Activated B cell treated with CpG ODN at 0.5 μM for 24 hours (primary cell): ENCODE measurements at regions of chr19 and their contacts with region 1.

Region 1: DNA sequence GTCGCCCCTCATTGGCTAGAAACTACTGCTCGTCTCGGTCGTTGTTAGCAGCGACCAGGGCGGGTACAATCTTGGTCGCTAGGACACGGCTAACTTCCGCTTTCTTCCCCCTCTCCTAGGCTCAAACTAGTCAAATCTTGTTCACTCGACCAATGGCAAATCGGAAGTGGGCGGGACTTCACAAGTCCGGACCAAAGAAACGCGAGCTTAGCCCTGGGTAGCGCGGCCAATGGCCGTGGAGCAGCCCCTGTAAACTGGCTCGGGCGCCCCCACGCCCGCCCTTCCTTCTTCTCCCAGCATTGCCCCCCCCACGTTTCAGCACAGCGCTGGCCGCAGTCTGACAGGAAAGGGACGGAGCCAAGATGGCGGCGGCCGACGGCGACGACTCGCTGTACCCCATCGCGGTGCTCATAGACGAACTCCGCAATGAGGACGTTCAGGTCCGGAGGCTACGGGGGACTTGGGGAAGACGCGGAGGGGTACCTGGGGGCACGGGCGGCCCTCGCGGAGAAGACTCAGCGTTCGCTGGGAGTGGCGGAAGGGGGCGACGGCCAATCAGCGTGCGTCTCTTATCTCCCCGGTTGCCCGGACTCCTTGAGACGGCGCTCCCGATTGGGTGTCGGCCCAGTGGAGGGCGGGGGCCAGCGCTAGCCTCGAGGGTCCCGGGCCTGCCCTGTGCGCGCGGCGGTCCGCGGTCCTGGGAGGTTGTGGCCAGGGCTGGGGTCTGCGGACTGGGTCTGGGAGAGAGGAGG is at the start of gene PPP2R1A:
- DNase-seq: peak; percentile 96
- ATAC-seq: peak; percentile 78
- H3K4me3 Mint-ChIP-seq: peak within 1 kb of the TSS; percentile 95
- H3K27ac Mint-ChIP-seq: peak within 1 kb of the TSS; percentile 98
- H3K4me1 Mint-ChIP-seq: peaks cover 54% of the 10 kb centered on the region
- H3K27me3 Mint-ChIP-seq: no peaks in the 10 kb centered on the region
- CTCF ChIP-seq: no peak
- total RNA-seq, gene PPP2R1A: 244 and 245 TPM in 2 replicates

Region 2: DNA sequence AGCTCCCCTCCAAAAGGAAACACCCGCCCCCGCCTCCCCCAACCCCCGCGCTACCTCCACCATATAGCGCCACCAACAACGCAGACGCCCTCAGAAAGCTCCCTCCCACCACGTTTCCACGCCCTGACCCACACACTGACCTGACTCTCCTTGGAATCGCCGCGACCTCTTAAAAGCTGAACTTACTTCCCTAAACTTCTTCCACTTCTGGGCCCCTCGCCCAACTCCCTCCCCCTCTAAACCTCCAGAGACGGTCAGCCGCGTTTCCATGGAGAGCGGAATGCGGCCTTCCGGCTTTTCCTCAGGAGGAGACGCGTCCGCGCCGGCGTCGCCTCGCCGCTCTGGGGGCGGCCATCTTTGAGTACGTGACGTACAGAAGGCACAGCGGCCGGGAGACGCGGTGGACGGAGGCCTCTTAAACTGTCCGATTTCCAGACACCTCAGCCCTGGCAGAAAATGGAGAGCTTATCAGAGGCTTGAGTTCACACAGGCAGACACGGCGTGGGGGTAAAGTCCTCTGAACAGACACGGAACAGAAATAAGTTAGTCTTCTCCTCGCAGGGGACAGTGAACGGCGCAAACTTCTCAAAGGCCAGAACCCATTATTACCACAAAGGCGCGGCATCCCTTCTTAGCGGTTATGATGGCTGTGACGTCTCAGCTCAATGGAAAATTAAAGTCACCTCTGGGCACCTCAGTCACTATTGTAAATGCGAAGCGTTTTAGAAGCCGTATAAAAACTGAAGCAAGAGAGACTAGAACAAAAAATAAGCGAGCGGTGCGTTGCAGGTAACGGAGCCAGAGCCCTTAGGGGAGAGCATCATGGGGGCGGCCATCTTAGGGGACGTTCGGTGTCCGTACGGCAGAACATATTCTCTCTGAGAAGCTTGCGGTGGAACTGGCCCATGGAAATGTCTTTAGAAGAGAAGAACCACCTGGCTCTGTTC is 141.1 kb before region 1 on chr19 and contains the start of gene ZNF432:
- CTCF ChIA-PET with region 1: no interaction called
- POLR2A ChIA-PET with region 1: interaction called, 9 read pairs
- intact Hi-C with region 1: loop called (anchors 1 kb)
- DNase-seq: peak; percentile 82
- ATAC-seq: peak; percentile 88
- H3K4me3 Mint-ChIP-seq: peak within 1 kb of the TSS; percentile 100
- H3K27ac Mint-ChIP-seq: peak within 1 kb of the TSS; percentile 99
- H3K4me1 Mint-ChIP-seq: peaks cover 19% of the 10 kb centered on the region
- H3K27me3 Mint-ChIP-seq: no peaks in the 10 kb centered on the region
- CTCF ChIP-seq: no peak
- total RNA-seq, gene ZNF432: 18.1 and 18.4 TPM in 2 replicates

Region 3: DNA sequence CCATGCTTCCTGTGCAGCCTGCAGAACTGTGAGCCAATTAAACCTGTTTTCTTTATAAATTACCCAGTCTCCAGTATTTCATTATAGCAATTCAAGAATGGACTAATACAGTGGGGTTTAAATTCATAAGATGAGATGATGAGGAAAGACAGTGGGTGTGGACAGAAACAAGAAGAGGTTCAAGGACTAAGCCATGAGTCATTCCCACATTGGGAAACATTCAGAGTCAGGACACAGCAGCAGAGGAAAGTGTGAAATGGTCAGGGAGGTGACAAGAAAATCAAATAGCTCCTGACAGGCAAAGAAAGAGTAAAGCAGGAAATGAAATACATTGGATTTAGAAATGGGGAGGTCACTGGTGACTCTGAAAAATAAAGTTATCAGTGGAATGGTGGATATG is 103.4 kb before region 1 on chr19:
- CTCF ChIA-PET with region 1: no interaction called
- POLR2A ChIA-PET with region 1: no interaction called
- intact Hi-C with region 1: no loop called
- DNase-seq: no peak
- ATAC-seq: no peak
- H3K4me3 Mint-ChIP-seq: no peak overlapping the region
- H3K27ac Mint-ChIP-seq: no peak overlapping the region
- H3K4me1 Mint-ChIP-seq: peaks cover 3% of the 10 kb centered on the region
- H3K27me3 Mint-ChIP-seq: no peaks in the 10 kb centered on the region
- CTCF ChIP-seq: no peak

Region 4: GRCh38 chr19:52171321-52172169 is 18.4 kb before region 1 on chr19 and contains the start of gene ZNF836:
- CTCF ChIA-PET with region 1: no interaction called
- POLR2A ChIA-PET with region 1: interaction called, 62 read pairs
- intact Hi-C with region 1: loop called (anchors 1 kb)
- DNase-seq: peak; percentile 80
- ATAC-seq: peak; percentile 97
- H3K4me3 Mint-ChIP-seq: peak within 1 kb of the TSS; percentile 97
- H3K27ac Mint-ChIP-seq: peak within 1 kb of the TSS; percentile 96
- H3K4me1 Mint-ChIP-seq: peaks cover 27% of the 10 kb centered on the region
- H3K27me3 Mint-ChIP-seq: no peaks in the 10 kb centered on the region
- CTCF ChIP-seq: no peak
- total RNA-seq, gene ZNF836: 27.4 and 28.0 TPM in 2 replicates

Region 5: GRCh38 chr19:52258426-52258825 is 68.5 kb after region 1 on chr19:
- CTCF ChIA-PET with region 1: no interaction called
- POLR2A ChIA-PET with region 1: no interaction called
- intact Hi-C with region 1: no loop called
- DNase-seq: no peak
- ATAC-seq: no peak
- H3K4me3 Mint-ChIP-seq: no peak overlapping the region
- H3K27ac Mint-ChIP-seq: no peak overlapping the region
- H3K4me1 Mint-ChIP-seq: no peaks in the 10 kb centered on the region
- H3K27me3 Mint-ChIP-seq: peaks cover 2% of the 10 kb centered on the region
- CTCF ChIP-seq: no peak

Region 6: DNA sequence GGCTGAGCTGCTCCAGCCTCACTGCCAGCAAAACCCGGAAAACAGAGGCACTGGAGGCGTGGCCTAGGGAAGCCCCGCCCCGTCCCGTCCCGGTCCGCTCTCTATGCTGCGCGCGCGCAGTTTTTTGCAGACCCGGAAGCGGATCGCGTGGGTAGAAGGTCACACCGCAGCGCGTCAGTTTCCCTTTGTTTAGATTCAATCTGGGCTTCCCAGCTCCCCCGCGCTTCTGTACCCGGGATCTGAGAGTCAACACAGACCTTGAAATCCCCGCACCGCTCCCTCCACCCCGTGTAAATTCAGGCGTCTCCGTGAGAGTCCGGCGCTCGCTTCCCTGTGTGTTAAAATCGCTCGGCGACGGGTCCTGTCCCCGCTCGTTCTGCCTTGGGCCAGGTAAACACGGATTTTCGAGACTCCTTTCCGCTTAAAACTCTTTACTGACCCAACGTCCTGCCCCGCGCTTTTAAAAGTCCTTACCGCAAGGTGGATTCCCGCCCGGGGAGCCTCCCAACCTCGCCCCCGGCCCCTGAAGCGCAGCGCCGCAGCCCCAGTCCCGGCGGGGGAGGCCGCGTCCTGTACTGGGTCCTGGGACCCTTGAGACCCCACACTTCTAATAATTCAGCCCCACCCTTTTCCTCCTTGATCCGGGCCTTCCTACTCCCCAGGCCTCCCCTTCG is 146.3 kb after region 1 on chr19 and contains the start of gene ZNF610:
- CTCF ChIA-PET with region 1: no interaction called
- POLR2A ChIA-PET with region 1: interaction called, 10 read pairs
- intact Hi-C with region 1: no loop called
- DNase-seq: peak; percentile 84
- ATAC-seq: peak; percentile 96
- H3K4me3 Mint-ChIP-seq: peak within 1 kb of the TSS; percentile 97
- H3K27ac Mint-ChIP-seq: peak within 1 kb of the TSS; percentile 93
- H3K4me1 Mint-ChIP-seq: peaks cover 14% of the 10 kb centered on the region
- H3K27me3 Mint-ChIP-seq: no peaks in the 10 kb centered on the region
- CTCF ChIP-seq: no peak
- total RNA-seq, gene ZNF610: 1.1 and 2.0 TPM in 2 replicates

Region 7: DNA sequence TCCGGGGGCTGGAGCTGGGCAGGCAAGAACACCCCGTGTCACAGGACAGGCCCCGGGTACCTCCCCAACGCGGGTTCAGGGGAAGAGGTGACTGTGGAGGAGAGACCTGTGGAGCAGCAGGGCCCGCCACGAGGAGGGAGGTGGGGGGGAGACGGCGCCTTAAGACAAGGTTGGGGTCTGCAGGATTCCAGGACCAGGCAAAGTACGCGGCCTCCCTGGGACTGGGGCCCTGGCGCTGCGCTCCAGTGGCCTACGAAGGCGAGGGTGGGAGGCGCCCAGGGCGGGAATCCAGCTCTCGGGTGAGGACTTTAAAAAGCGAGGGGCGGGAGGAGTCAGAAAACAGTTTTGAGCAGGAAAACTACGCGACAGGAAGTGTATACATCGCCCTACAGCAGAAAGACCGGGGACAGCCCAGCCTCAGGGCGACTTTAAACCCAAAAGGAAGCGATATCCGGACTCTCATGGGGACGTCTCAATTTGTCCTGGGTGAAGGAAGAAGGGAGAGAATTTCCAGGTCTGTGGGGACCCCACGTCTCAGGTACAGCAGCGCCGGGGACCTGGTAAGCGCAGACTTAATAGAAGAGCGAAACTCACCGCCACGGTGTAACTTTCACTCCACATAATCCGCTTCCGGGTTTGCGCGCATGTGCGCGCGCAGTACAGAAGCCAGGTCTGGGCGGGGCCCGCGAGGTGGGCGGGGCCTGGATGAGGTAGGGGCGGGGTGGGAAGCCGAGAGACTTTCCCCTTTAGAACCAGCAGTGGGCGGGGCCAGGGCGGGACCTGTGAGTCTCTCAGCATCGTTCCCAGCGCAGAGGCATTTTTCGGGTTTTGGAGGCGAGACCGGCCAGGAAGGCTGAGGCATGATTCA is 448.0 kb after region 1 on chr19 and contains the start of gene ZNF83:
- CTCF ChIA-PET with region 1: no interaction called
- POLR2A ChIA-PET with region 1: interaction called, 12 read pairs
- intact Hi-C with region 1: no loop called
- DNase-seq: peak; percentile 89
- ATAC-seq: peak; percentile 94
- H3K4me3 Mint-ChIP-seq: peak within 1 kb of the TSS; percentile 95
- H3K27ac Mint-ChIP-seq: peak within 1 kb of the TSS; percentile 98
- H3K4me1 Mint-ChIP-seq: peaks cover 15% of the 10 kb centered on the region
- H3K27me3 Mint-ChIP-seq: no peaks in the 10 kb centered on the region
- CTCF ChIP-seq: no peak
- total RNA-seq, gene ZNF83: 42.3 and 49.4 TPM in 2 replicates

Region 8: DNA sequence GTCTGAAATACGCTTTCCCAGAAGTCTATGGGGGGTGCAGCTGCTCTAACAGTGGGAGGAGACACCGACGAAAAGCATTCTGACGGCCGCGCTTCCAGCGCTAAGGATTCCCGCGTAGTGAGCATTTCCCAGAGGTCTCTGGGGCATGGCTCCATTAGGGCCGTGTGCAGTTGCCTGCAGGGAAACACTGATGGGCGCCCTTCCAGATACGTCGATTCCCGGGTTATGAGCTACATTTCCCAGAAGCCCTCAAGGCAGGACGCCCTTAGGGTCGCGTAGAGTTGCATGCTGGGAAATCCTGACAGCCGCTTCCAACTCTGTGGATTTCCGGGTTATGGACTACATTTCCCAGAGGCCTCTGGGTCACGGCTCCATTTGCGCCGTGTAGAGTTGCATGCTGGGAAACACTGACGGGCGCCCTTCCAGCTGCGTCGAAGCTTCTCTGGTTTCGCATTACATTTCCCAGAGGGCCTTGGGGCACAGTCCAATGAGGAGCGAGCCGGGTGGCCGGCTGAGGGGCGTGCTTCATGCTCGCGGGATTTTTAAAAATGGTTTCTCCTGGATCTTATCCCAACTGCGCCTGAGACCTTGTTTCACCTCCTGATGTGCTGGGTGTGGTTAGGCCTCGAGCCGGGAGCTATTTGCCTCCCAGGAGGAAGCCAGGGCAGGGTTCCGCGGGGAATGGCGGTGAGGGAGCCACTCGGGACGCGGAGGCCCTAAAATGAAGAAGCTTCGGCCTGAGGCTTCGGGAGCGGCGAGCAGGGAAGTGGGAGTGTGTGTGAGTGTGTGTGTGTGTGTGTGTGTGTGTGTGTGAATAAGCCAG is 1330.8 kb after region 1 on chr19:
- CTCF ChIA-PET with region 1: no interaction called
- POLR2A ChIA-PET with region 1: interaction called, 17 read pairs
- intact Hi-C with region 1: no loop called
- DNase-seq: peak; percentile 71
- ATAC-seq: peak; percentile 97
- H3K4me3 Mint-ChIP-seq: peak overlapping the region; percentile 94
- H3K27ac Mint-ChIP-seq: peak overlapping the region; percentile 87
- H3K4me1 Mint-ChIP-seq: peaks cover 16% of the 10 kb centered on the region
- H3K27me3 Mint-ChIP-seq: no peaks in the 10 kb centered on the region
- CTCF ChIP-seq: no peak